PC-9 (cell line): ENCODE measurements at regions of chr17 and their contacts with region 1.

Region 1: DNA sequence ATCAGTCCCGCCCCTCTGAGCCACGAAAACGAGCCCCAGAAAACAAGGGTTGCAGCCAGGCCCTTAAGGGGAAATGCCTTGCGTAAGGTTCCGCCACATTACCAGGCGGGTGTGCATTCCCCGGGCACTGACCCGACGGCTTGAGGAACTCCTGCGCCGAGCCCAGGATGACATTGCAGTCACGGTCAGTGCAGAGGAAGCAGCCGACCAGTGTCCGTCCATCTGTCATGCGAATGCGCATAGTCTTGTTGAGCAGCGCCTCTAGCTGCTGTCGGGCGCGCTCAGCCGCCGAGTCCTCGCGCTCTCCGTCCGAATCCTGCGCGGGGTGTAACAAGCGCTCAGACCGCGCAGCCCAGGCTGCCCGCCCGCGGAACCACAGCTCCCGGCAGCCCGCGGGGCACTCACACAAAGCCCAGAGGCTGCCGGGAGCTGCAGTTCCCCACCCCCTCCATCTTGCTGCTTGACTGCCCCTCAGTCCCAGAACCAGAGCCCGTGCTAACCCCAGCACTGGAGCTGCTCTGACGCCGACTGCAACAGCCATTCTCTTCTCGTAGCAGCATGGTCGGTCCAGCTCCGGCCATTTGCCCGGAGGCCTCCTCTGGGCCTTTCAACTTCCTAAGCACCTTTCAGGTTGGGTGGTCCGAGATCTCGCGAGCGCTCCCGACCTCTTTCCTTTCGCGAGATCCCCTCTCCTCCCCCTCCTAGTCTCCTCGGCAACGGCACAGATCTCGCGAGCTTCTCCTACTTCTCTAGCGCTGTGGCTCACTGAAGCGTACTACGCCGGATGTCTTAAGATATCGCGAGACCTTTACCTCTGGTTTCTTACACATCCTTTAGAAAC is at the start of gene NAA38:
- DNase-seq: peak; percentile 96 to 97
- H3K4me3 ChIP-seq: peak within 1 kb of the TSS; percentile 97
- H3K27ac ChIP-seq: peak within 1 kb of the TSS; percentile 79
- H3K4me1 ChIP-seq: peaks cover 13% of the 10 kb centered on the region
- H3K27me3 ChIP-seq: no peaks in the 10 kb centered on the region
- CTCF ChIP-seq: no peak
- total RNA-seq, gene NAA38: 159 and 176 TPM in 2 replicates

Region 2: DNA sequence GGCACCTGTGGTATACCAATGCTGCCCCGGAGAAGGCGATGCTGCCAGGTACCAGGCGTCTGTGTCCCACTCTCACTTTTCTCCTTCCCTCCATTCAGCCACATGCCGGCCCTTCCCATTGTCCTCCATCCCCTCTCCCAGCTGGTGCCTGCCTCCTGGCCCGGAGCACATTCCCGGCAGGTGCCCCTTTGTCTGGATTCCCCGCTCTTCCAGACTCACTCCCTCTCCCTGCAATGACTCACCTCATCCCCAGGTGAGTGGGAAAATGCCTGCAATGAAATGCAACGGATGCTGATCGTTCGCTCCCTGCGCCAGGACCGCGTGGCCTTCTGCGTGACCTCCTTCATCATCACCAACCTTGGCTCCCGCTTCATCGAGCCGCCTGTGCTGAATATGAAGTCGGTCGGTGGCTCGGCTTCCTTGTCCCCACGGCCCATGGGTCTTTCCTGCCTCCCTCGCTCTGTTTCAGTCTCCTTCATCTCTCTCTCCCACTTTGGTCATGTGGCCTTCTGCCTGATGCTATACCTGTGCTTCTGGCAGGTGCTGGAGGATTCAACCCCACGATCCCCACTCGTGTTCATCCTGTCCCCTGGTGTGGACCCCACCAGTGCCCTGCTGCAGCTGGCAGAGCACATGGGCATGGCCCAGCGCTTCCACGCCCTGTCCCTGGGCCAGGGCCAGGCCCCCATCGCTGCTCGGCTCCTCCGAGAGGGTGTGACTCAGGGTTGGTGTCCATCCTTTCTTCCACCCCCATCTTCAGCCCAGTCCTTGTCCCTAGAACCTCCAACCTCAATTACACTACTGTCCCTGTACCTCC is 33.3 kb before region 1 on chr17:
- CTCF ChIA-PET with region 1: no interaction called
- POLR2A ChIA-PET with region 1: interaction called, 4 read pairs
- intact Hi-C with region 1: loop called (anchors 5 kb)
- DNase-seq: no peak
- H3K4me3 ChIP-seq: no peak overlapping the region
- H3K27ac ChIP-seq: no peak overlapping the region
- H3K4me1 ChIP-seq: no peaks in the 10 kb centered on the region
- H3K27me3 ChIP-seq: no peaks in the 10 kb centered on the region
- CTCF ChIP-seq: no peak

Region 3: GRCh38 chr17:7834962-7835813 is 21.9 kb before region 1 on chr17:
- CTCF ChIA-PET with region 1: interaction called, 12 read pairs
- POLR2A ChIA-PET with region 1: no interaction called
- intact Hi-C with region 1: loop called (anchors 1 kb)
- DNase-seq: peak; percentile 84 to 96
- H3K4me3 ChIP-seq: peak overlapping the region; percentile 82
- H3K27ac ChIP-seq: 0 out of 2 replicates have a peak overlapping the region, but pooled peaks have one; percentile 23
- H3K4me1 ChIP-seq: peaks cover 18% of the 10 kb centered on the region
- H3K27me3 ChIP-seq: no peaks in the 10 kb centered on the region
- CTCF ChIP-seq: peak; percentile 63; the same call in 1 of the 2 replicates

Region 4: GRCh38 chr17:7844292-7845154 is 12.6 kb before region 1 on chr17:
- CTCF ChIA-PET with region 1: interaction called, 7 read pairs
- POLR2A ChIA-PET with region 1: no interaction called
- intact Hi-C with region 1: loop called (anchors 1 kb)
- DNase-seq: peak; percentile 78 to 93
- H3K4me3 ChIP-seq: peak overlapping the region; percentile 93
- H3K27ac ChIP-seq: peak overlapping the region; percentile 92
- H3K4me1 ChIP-seq: peaks cover 10% of the 10 kb centered on the region
- H3K27me3 ChIP-seq: no peaks in the 10 kb centered on the region
- CTCF ChIP-seq: no peak

Region 5: DNA sequence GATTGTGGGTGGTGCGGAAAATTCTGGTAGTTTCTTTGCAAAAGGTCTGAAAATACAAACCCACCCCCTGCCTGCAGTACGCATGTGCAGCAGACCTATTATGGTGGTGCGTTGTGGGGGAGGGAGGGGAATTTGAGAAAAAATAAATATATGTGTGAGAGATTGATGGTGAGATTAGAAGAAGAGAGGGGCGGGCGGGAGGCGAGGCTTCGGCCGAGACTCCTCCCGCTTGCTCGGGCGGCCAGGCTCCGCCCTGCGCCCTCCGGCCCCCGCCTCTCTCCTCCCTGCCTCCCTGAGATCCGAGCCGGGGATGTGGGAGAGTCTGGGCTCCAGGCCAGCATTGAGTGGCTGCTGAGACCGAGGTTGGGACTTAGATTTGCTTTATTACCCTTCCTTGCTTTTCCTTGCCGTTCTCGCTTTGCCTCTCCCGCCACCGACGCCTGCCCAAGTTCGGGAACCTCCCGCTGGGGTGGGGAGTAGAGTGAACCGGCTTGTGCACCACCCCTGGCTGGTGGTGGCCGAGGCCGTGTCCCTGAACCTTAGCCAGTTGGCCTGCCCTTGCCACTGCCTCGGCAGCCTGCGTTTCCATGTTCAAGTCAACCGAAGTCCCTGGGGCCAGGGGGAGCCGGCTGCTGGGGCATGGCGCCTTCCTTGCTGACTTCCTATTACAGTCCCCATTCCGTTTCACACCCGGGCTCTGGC is 30.5 kb after region 1 on chr17:
- CTCF ChIA-PET with region 1: no interaction called
- POLR2A ChIA-PET with region 1: interaction called, 3 read pairs
- intact Hi-C with region 1: loop called (anchors 1 kb)
- DNase-seq: peak; percentile 88 to 94
- H3K4me3 ChIP-seq: peak overlapping the region; percentile 84
- H3K27ac ChIP-seq: peak overlapping the region; percentile 80
- H3K4me1 ChIP-seq: peaks cover 27% of the 10 kb centered on the region
- H3K27me3 ChIP-seq: no peaks in the 10 kb centered on the region
- CTCF ChIP-seq: no peak

Region 6: GRCh38 chr17:8103549-8103948 is 246.4 kb after region 1 on chr17:
- CTCF ChIA-PET with region 1: no interaction called
- POLR2A ChIA-PET with region 1: no interaction called
- intact Hi-C with region 1: no loop called
- DNase-seq: no peak
- H3K4me3 ChIP-seq: no peak overlapping the region
- H3K27ac ChIP-seq: no peak overlapping the region
- H3K4me1 ChIP-seq: no peaks in the 10 kb centered on the region
- H3K27me3 ChIP-seq: no peaks in the 10 kb centered on the region
- CTCF ChIP-seq: no peak

Region 7: GRCh38 chr17:8248751-8249607 is 391.9 kb after region 1 on chr17 and contains the start of gene PFAS:
- CTCF ChIA-PET with region 1: no interaction called
- POLR2A ChIA-PET with region 1: no interaction called
- intact Hi-C with region 1: no loop called
- DNase-seq: peak; percentile 83 to 96
- H3K4me3 ChIP-seq: peak within 1 kb of the TSS; percentile 99
- H3K27ac ChIP-seq: peak within 1 kb of the TSS; percentile 93
- H3K4me1 ChIP-seq: peaks cover 8% of the 10 kb centered on the region; the same call in 1 of the 2 replicates
- H3K27me3 ChIP-seq: no peaks in the 10 kb centered on the region
- CTCF ChIP-seq: no peak
- total RNA-seq, gene PFAS: 54.5 and 68.2 TPM in 2 replicates